Activated CD8-positive, alpha-beta T cell treated with anti-CD3 and anti-CD28 coated beads for 36 hours (primary cell): ENCODE measurements at regions of chr1 and their contacts with region 1.

Region 1: GRCh38 chr1:176157995-176158394 is 49.1 kb downstream of the COP1 start:
- DNase-seq: no peak
- ATAC-seq: no peak
- H3K4me3 Mint-ChIP-seq: no peak overlapping the region
- H3K27ac Mint-ChIP-seq: no peak overlapping the region
- H3K4me1 Mint-ChIP-seq: peaks cover 41% of the 10 kb centered on the region
- H3K27me3 Mint-ChIP-seq: no peaks in the 10 kb centered on the region
- CTCF ChIP-seq: no peak

Region 2: GRCh38 chr1:176111835-176112234 is 46.2 kb before region 1 on chr1:
- CTCF ChIA-PET with region 1: no interaction called
- POLR2A ChIA-PET with region 1: no interaction called
- intact Hi-C with region 1: loop called (anchors 5 kb)
- DNase-seq: no peak
- ATAC-seq: no peak
- H3K4me3 Mint-ChIP-seq: no peak overlapping the region
- H3K27ac Mint-ChIP-seq: no peak overlapping the region
- H3K4me1 Mint-ChIP-seq: peaks cover 17% of the 10 kb centered on the region
- H3K27me3 Mint-ChIP-seq: no peaks in the 10 kb centered on the region
- CTCF ChIP-seq: no peak

Region 3: DNA sequence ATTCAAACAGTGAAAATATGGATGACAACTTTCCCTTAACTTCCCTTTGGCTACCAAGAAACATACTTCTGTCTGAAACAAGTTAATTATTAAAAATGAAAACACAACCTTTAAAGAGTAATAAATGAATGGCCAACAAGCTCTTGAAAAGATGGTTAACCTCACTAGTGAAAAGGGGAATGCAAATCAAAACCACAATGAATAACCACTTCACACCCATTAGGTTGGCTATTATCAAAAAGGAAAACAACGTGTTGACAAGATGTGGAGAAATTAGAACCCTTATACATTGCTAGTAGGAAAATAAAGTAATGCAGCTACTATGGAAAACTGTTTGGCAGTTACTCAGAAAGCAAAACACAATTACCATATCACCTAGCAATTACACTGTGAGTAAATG is 35.0 kb after region 1 on chr1:
- CTCF ChIA-PET with region 1: interaction called, 3 read pairs
- POLR2A ChIA-PET with region 1: no interaction called
- intact Hi-C with region 1: loop called (anchors 5 kb)
- DNase-seq: no peak
- ATAC-seq: peak; percentile 51
- H3K4me3 Mint-ChIP-seq: no peak overlapping the region
- H3K27ac Mint-ChIP-seq: peak overlapping the region; percentile 63
- H3K4me1 Mint-ChIP-seq: peaks cover 75% of the 10 kb centered on the region
- H3K27me3 Mint-ChIP-seq: no peaks in the 10 kb centered on the region
- CTCF ChIP-seq: no peak

Region 4: GRCh38 chr1:176206961-176207902 is 49.2 kb after region 1 on chr1 and contains the start of gene COP1:
- CTCF ChIA-PET with region 1: interaction called, 3 read pairs
- POLR2A ChIA-PET with region 1: interaction called, 4 read pairs
- intact Hi-C with region 1: loop called (anchors 1 kb)
- DNase-seq: peak; percentile 97
- ATAC-seq: peak; percentile 84
- H3K4me3 Mint-ChIP-seq: peak within 1 kb of the TSS; percentile 87
- H3K27ac Mint-ChIP-seq: peak within 1 kb of the TSS; percentile 98
- H3K4me1 Mint-ChIP-seq: peaks cover 25% of the 10 kb centered on the region
- H3K27me3 Mint-ChIP-seq: no peaks in the 10 kb centered on the region
- CTCF ChIP-seq: no peak
- total RNA-seq, gene COP1: 33.8 to 36.9 TPM